ENCODE measurements at regions of chr1 and their contacts with region 1.

Region 1: GRCh38 chr1:150578965-150579798 is at the start of gene MCL1:
- DNase-seq: peak; percentile 96
- ATAC-seq: peak; percentile 80
- H3K4me3 ChIP-seq: peak within 1 kb of the TSS; percentile 93
- H3K27ac ChIP-seq: peak within 1 kb of the TSS; percentile 95
- H3K4me1 ChIP-seq: peaks cover 8% of the 10 kb centered on the region
- H3K27me3 ChIP-seq: no peaks in the 10 kb centered on the region
- CTCF ChIP-seq: 0 out of 2 replicates have a peak, but pooled peaks have one; percentile 16
- POLR2A ChIP-seq: peak; percentile 99
- RAD21 ChIP-seq: peak; percentile 27; the same call in 1 of the 2 replicates
- total RNA-seq, gene MCL1: 142 and 212 TPM in 2 replicates

Region 2: GRCh38 chr1:150473659-150474058 is 105.5 kb before region 1 on chr1:
- CTCF ChIA-PET with region 1: no interaction called
- POLR2A ChIA-PET with region 1: no interaction called
- dilution Hi-C with region 1: no loop called
- in situ Hi-C with region 1: no loop called
- intact Hi-C with region 1: no loop called
- DNase-seq: no peak
- ATAC-seq: no peak
- H3K4me3 ChIP-seq: no peak overlapping the region
- H3K27ac ChIP-seq: no peak overlapping the region
- H3K4me1 ChIP-seq: peaks cover 9% of the 10 kb centered on the region
- H3K27me3 ChIP-seq: no peaks in the 10 kb centered on the region
- CTCF ChIP-seq: no peak
- POLR2A ChIP-seq: no peak
- RAD21 ChIP-seq: no peak

Region 3: GRCh38 chr1:150567717-150568593 is 11.2 kb before region 1 on chr1:
- CTCF ChIA-PET with region 1: interaction called, 5 read pairs
- POLR2A ChIA-PET with region 1: interaction called, 24 read pairs
- dilution Hi-C with region 1: no loop called
- in situ Hi-C with region 1: no loop called
- intact Hi-C with region 1: no loop called
- DNase-seq: peak; percentile 98
- ATAC-seq: peak; percentile 69
- H3K4me3 ChIP-seq: peak overlapping the region; percentile 3; the same call in 1 of the 2 replicates
- H3K27ac ChIP-seq: peak overlapping the region; percentile 89
- H3K4me1 ChIP-seq: peaks cover 33% of the 10 kb centered on the region
- H3K27me3 ChIP-seq: no peaks in the 10 kb centered on the region
- CTCF ChIP-seq: no peak
- POLR2A ChIP-seq: peak; percentile 61
- RAD21 ChIP-seq: no peak

Region 4: DNA sequence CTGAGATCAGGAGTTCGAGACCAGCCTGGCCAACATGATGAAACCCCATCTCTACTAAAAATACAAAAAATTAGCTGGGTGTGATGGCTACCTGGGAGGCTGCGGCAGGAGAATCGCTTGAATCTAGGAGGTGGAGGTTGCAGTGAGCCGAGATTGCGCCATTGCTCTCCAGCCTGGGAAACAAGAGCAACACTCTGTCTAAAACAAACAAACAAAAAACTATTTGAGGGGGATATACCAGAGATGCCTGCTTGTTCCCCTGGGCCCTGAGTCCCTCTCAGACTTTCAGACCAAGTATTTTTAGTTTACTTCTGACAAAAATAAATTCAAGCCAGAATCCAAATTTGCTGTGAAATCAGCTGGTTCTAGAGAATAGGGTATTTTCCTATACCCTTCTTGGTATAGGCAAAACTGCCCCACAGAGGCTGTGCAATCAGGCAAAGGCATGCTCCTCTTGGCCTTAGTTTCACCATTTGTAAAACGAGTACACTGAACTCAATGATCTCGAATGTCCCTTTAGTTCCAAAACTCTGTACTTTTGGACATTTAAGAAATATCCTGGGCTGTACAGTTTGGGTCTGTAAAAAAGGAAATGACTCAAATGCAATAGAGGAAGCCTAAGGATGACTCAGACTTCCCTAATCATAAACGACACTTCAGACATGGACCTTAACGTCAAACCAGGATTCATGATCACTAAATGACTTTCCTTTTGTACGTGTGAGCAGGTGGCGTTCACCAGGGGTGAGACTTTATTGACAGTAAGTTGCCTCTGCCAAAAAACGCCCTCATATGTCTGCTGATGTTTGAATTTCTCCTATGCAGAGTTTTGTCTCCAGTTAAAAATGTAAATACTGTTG is 34.1 kb after region 1 on chr1:
- CTCF ChIA-PET with region 1: interaction called, 3 read pairs
- POLR2A ChIA-PET with region 1: interaction called, 16 read pairs
- dilution Hi-C with region 1: no loop called
- in situ Hi-C with region 1: loop called (anchors 5 kb)
- intact Hi-C with region 1: loop called (anchors 2 kb)
- DNase-seq: peak; percentile 98
- ATAC-seq: peak; percentile 69
- H3K4me3 ChIP-seq: peak overlapping the region; percentile 3; the same call in 1 of the 2 replicates
- H3K27ac ChIP-seq: peak overlapping the region; percentile 90
- H3K4me1 ChIP-seq: peaks cover 14% of the 10 kb centered on the region
- H3K27me3 ChIP-seq: no peaks in the 10 kb centered on the region
- CTCF ChIP-seq: no peak
- POLR2A ChIP-seq: peak; percentile 57
- RAD21 ChIP-seq: no peak

Region 5: DNA sequence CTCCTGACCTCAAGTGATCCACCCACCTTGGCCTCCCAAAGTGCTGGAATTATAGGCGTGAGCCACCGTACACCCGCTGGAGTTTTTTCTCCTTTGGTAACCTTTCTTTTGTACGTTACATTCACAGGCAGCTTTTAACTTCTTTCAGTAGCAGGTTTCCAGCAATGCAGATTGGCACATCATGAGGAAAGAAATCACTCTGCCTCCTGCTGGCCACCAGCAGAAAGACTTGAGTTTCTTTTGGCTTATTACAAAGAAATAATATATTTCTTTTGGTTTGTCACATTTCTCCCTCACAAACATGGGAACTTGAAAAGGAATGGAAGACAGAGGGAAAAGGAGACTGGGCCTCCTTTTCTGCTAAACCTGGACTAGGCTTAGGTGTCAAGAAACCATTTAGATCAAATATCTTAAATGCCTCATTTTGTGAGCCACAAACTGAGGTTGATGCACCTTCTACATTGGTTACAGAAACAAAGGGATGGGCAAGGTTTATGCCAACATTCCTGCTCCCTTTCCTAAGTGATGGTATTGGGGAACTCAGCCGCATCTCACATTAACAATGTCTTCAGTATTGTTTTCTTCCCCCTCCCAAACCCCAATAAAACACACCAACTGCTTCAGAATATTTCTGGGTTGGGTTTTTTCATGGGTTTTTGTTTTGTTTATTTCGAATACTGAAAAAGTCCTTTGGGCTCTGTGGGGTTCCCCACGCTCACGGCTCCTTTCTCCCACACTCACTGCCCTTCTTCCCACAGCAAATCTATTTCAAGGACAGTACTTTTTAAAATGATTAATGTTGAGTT is 42.5 kb after region 1 on chr1:
- CTCF ChIA-PET with region 1: interaction called, 8 read pairs
- POLR2A ChIA-PET with region 1: interaction called, 16 read pairs
- dilution Hi-C with region 1: no loop called
- in situ Hi-C with region 1: no loop called
- intact Hi-C with region 1: loop called (anchors 1 kb)
- DNase-seq: peak; percentile 79
- ATAC-seq: peak; percentile 57
- H3K4me3 ChIP-seq: no peak overlapping the region
- H3K27ac ChIP-seq: no peak overlapping the region; the same call in 1 of the 2 replicates
- H3K4me1 ChIP-seq: peaks cover 10% of the 10 kb centered on the region
- H3K27me3 ChIP-seq: no peaks in the 10 kb centered on the region
- CTCF ChIP-seq: peak; percentile 79
- POLR2A ChIP-seq: no peak
- RAD21 ChIP-seq: peak; percentile 66

Region 6: DNA sequence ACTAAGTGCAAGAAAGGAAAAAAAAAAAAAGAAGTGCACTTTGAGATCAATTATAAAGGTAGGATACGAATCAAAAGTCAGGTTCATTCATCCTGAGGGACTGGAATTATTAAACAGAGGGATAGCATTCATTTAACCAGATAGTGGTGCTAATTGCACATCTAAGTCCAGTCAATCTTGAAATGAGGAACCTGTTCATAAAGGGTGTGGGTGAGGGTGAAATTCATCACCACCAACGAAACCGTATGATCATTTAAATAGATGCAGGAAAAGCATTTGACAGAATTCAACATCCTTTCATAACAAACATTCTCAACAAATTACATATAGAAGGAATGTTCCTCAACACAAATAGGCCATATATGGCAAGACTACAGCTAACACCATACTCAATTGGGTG is 180.8 kb after region 1 on chr1:
- CTCF ChIA-PET with region 1: no interaction called
- POLR2A ChIA-PET with region 1: no interaction called
- dilution Hi-C with region 1: no loop called
- in situ Hi-C with region 1: no loop called
- intact Hi-C with region 1: no loop called
- DNase-seq: no peak
- ATAC-seq: no peak
- H3K4me3 ChIP-seq: no peak overlapping the region
- H3K27ac ChIP-seq: no peak overlapping the region
- H3K4me1 ChIP-seq: peaks cover 5% of the 10 kb centered on the region
- H3K27me3 ChIP-seq: no peaks in the 10 kb centered on the region
- CTCF ChIP-seq: no peak
- POLR2A ChIP-seq: no peak
- RAD21 ChIP-seq: no peak

Region 7: DNA sequence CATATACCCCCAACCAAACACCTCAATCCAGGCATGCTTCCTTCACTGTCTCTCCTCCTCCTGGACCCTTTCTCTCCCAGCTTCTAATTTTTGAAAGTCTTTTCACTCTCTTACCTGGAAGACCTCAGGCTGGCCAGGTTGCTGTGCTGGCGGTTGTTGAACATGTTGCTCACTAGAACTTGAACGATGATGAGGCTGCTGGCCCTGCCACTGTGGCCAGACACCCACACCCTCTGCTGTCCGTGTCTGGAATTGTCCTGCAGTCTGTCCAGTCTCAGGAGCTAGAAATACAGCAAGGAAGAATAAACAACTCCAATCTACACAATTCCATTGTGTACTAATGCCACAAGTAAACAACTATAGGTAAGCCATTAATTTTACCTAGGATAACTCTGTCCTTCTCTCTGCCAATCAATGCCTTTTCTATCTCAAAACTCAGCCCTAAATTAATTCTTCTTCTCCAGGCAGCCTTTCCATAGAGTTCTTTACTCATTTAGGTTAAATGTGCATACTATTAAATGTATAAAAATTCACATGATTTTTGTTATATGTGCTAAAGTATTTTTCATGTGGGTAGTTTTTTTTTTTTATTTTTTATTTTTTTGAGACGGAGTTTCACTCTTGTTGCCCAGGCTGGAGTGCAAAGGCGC is 234.0 kb after region 1 on chr1:
- CTCF ChIA-PET with region 1: no interaction called
- POLR2A ChIA-PET with region 1: interaction called, 4 read pairs
- dilution Hi-C with region 1: no loop called
- in situ Hi-C with region 1: no loop called
- intact Hi-C with region 1: loop called (anchors 2 kb)
- DNase-seq: peak; percentile 77
- ATAC-seq: peak; percentile 94
- H3K4me3 ChIP-seq: no peak overlapping the region
- H3K27ac ChIP-seq: no peak overlapping the region
- H3K4me1 ChIP-seq: peaks cover 3% of the 10 kb centered on the region; the same call in 1 of the 2 replicates
- H3K27me3 ChIP-seq: no peaks in the 10 kb centered on the region
- CTCF ChIP-seq: peak; percentile 82
- POLR2A ChIP-seq: no peak
- RAD21 ChIP-seq: peak; percentile 92

Region 8: DNA sequence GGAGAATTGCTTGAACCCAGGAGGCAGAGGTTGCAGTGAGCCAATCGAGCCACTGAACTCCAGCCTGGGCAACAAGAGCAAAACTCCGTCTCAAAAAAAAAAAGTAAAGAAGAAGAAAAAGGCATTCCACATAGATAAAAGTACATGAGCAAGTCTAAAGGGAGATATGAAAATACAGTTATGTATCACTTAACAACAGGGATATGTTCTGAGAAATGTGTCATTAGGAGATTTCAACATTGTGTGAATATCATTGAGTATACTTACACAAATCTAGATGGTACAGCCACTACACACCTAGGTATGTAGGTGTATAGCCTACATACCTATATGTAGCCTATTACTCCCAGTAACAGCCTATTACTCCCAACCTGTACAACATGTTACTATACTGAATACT is 284.5 kb after region 1 on chr1:
- CTCF ChIA-PET with region 1: no interaction called
- POLR2A ChIA-PET with region 1: no interaction called
- dilution Hi-C with region 1: no loop called
- in situ Hi-C with region 1: no loop called
- intact Hi-C with region 1: no loop called
- DNase-seq: no peak
- ATAC-seq: no peak
- H3K4me3 ChIP-seq: no peak overlapping the region
- H3K27ac ChIP-seq: no peak overlapping the region
- H3K4me1 ChIP-seq: 0 out of 2 replicates have a peak, but pooled peaks cover 2% of the 10 kb centered on the region
- H3K27me3 ChIP-seq: no peaks in the 10 kb centered on the region
- CTCF ChIP-seq: no peak
- POLR2A ChIP-seq: no peak
- RAD21 ChIP-seq: no peak

Region 9: DNA sequence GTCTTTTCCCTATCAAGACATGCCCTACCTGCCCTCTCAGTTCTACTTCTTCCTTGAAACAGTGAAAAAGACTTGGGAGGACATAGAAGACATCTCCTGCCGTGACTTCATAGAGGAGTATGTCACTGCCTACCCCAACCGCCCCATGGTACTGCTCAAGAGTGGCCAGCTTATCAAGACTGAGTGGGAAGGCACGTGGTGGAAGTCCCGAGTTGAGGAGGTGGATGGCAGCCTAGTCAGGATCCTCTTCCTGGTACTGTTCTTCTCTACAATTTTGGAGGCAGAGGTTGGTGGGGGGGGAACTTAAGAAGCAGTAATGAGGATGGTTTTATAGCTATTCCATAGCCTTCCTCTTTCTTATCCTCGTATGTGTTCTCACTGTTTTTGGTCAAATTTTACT is 365.7 kb after region 1 on chr1:
- CTCF ChIA-PET with region 1: no interaction called
- POLR2A ChIA-PET with region 1: interaction called, 10 read pairs
- dilution Hi-C with region 1: no loop called
- in situ Hi-C with region 1: no loop called
- intact Hi-C with region 1: no loop called
- DNase-seq: no peak
- ATAC-seq: no peak
- H3K4me3 ChIP-seq: no peak overlapping the region
- H3K27ac ChIP-seq: no peak overlapping the region
- H3K4me1 ChIP-seq: no peaks in the 10 kb centered on the region
- H3K27me3 ChIP-seq: no peaks in the 10 kb centered on the region
- CTCF ChIP-seq: no peak
- POLR2A ChIP-seq: no peak
- RAD21 ChIP-seq: no peak